ENCODE measurements at regions of chr6 and their contacts with region 1.

Region 1: GRCh38 chr6:90701146-90701781 is 114.4 kb upstream of the MAP3K7 start:
- DNase-seq: no peak
- H3K4me3 ChIP-seq: no peak overlapping the region
- H3K27ac ChIP-seq: no peak overlapping the region
- H3K4me1 ChIP-seq: no peaks in the 10 kb centered on the region
- H3K27me3 ChIP-seq: no peaks in the 10 kb centered on the region
- CTCF ChIP-seq: no peak
- POLR2A ChIP-seq: no peak

Region 2: DNA sequence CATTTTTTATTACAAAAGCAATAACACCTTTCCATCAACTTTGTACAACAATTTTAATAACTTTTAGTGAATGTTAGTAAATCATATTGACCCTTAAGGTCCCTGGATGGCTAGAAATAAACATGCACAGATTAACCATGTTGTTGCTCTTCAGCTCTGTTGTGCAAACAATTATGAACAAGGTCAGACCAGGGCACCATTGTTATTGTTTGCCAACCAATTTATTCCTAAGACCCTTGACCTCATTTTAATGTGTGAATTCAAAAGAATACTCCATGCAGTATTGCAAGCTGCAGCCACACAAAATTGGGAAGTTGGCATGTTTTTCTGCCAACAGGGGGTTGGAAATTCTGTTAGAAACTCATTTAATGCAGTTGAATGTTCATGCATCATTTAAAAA is 312.2 kb after region 1 on chr6:
- intact Hi-C with region 1: loop called (anchors 10 kb)
- DNase-seq: no peak
- H3K4me3 ChIP-seq: no peak overlapping the region
- H3K27ac ChIP-seq: no peak overlapping the region
- H3K4me1 ChIP-seq: no peaks in the 10 kb centered on the region
- H3K27me3 ChIP-seq: no peaks in the 10 kb centered on the region
- CTCF ChIP-seq: no peak
- POLR2A ChIP-seq: no peak

Measured in breast epithelium (tissue), 4 donors.